WTC11 (cell line): ENCODE measurements at regions of chr14 and their contacts with region 1.

Region 1: DNA sequence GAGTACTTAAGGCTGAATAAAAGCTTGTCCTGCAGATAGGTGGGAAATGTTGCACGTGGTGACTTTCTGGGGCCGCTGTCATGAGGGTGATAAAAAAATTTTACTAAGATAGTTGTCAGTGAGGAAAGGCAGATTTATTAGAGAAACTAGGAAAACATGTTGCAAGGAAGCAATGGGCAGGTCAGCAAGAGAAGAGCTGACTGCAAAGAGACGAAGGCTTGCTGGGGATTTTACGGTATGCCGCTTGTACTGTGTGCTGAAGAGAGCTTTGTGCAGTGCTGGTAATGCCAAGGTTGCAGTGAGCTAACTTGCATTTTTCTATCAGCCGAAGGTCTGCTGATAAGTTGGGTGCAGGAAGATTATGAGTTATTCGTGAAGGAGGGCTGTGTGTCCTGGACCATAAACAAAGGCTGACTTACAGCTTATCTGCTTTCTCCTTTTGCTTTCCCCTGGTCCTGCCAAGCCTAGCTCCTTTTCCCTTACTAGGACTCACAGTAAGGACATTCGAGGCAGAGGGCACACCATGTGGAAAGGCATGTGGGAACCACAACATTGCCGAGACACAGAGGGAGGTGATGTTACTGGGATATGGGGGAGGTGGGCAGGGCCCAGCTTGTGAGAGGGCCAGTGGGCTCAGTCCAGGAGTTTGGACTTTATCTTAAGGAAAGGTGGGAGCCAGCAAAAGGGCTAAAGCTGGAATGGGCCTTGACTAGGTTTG is 7.4 kb upstream of the CCDC88C start:
- DNase-seq: no peak
- ATAC-seq: no peak
- H3K4me3 Mint-ChIP-seq: no peak overlapping the region
- H3K27ac Mint-ChIP-seq: no peak overlapping the region
- H3K4me1 Mint-ChIP-seq: no peaks in the 10 kb centered on the region
- H3K27me3 Mint-ChIP-seq: peaks cover 7% of the 10 kb centered on the region
- CTCF ChIP-seq: no peak

Region 2: DNA sequence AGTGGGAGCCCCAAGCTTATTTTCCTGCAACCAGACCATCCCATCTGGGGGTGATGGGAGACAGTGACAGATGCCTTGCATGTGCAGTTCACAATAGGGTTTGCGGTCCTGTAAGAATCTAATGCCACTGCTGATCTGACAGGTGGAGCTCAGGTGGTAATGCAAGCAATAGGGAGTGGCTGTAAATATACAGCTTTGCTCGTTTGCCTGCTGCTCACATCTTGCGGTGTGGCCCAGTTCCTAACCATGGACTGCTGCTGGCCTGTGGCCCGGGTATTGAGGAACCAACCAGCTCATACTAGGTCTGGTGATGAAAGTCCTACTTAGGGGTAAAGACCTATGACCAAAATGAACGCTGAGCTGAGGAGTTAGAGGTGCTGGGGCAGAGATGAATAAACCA is 28.8 kb after region 1 on chr14:
- CTCF ChIA-PET with region 1: interaction called, 11 read pairs
- POLR2A ChIA-PET with region 1: no interaction called
- DNase-seq: no peak
- ATAC-seq: peak; percentile 50
- H3K4me3 Mint-ChIP-seq: no peak overlapping the region
- H3K27ac Mint-ChIP-seq: no peak overlapping the region
- H3K4me1 Mint-ChIP-seq: peaks cover 15% of the 10 kb centered on the region
- H3K27me3 Mint-ChIP-seq: no peaks in the 10 kb centered on the region
- CTCF ChIP-seq: no peak

Region 3: DNA sequence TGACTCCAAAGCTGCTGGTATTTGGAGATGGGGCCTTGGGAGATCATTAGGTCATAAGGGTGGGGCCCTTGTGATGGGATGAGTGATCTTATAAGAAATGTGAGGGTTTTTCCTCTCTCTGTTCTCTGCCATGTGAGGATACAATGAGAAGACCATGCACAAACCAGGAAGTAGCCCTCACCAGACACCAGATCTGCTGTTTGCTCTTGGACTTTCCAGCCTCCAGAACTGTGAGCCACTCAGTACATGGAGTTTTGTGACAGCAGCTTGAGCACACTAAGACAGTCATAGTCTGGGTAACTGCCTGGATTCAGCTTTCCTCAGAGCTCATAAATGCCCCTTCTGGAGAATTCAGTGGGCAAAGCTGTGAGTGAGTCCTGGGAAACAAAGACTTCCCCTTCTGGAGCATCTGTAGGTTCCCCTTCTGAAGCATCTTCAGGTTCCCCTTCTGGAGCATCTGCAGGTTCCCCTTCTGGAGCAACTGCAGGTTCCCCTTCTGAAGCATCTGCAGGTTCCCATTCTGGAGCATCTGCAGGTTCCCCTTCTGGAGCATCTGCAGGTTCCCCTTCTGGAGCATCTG is 96.2 kb after region 1 on chr14:
- CTCF ChIA-PET with region 1: no interaction called
- POLR2A ChIA-PET with region 1: no interaction called
- DNase-seq: no peak
- ATAC-seq: no peak
- H3K4me3 Mint-ChIP-seq: no peak overlapping the region
- H3K27ac Mint-ChIP-seq: no peak overlapping the region
- H3K4me1 Mint-ChIP-seq: no peaks in the 10 kb centered on the region
- H3K27me3 Mint-ChIP-seq: peaks cover 13% of the 10 kb centered on the region
- CTCF ChIP-seq: no peak

Region 4: DNA sequence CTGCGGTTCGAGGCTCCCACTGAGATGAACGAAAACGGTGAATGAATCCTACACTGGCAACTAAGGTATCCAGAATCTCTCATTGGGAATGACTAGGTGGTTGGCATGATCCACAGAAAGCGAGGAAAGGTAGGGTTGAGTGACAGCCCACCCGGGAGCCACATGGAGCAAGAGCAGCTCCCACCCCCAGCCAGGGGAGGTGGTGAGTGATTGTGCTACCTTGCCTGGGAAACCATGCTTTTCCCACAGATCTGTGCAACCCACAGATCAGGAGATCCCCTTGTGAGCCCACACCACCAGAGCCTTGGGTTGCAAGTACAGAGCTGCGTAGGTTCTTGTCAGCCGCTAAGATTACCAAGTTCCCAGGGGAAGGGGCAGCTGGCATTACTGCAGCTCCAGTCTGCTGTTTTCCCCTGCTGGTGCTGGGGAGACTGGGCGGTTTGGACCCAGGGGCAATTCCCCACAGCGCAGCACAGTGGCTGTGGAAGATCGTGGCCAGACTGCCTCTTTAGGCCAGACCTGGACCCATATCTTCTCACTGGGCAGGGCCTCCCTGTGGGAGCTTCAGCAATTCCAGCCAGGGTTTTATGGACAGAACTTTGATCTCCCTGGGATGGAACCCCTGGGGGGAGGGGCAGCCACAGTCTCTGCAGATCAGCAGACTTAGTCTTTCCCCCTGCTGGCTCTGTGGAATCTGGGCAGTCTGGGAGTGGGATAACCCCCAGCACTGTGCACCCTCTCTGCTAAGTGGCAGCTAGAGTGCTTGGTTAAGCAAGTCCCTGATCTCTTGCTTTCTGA is 129.8 kb after region 1 on chr14:
- CTCF ChIA-PET with region 1: no interaction called
- POLR2A ChIA-PET with region 1: no interaction called
- DNase-seq: no peak
- ATAC-seq: no peak
- H3K4me3 Mint-ChIP-seq: no peak overlapping the region
- H3K27ac Mint-ChIP-seq: no peak overlapping the region
- H3K4me1 Mint-ChIP-seq: no peaks in the 10 kb centered on the region
- H3K27me3 Mint-ChIP-seq: peaks cover 19% of the 10 kb centered on the region
- CTCF ChIP-seq: no peak